ENCODE measurements at regions of chr10 and their contacts with region 1.

Region 1: DNA sequence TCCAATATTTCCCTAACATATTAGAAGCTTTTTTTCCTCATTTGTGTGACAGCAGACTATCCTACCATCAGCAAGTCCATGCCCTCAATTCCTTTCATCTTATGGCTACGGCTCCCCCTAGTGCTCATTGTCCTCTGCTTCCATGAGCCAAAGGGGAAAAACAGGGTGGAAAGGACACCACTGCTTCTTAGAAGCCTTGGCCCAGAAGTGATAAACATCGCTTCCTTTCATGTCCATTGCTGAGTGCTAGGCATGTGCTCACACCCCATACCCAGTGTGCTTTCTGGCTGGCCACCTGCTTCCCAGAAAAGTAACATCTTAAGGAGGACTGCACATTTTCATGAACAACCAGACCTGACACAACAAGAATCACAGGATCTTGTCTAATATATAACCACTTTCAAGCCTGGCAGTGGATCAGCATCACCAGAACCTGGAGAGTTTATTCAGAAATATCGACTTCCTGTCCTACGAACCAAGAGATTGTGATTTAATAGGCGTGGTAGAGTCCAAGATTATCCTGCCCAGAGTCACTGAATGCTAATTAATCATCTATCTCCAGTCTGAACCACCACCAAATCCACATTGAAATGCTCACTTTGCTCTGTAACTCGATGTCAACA is 650.5 kb upstream of the SORCS1 start:
- DNase-seq: peak; percentile 83
- H3K4me3 Mint-ChIP-seq: no peak overlapping the region
- H3K27ac Mint-ChIP-seq: no peak overlapping the region
- H3K4me1 Mint-ChIP-seq: peaks cover 6% of the 10 kb centered on the region
- H3K27me3 Mint-ChIP-seq: no peaks in the 10 kb centered on the region
- CTCF ChIP-seq: peak; percentile 68

Region 2: GRCh38 chr10:106705681-106706100 is 1109.3 kb before region 1 on chr10:
- CTCF ChIA-PET with region 1: interaction called, 35 read pairs
- POLR2A ChIA-PET with region 1: no interaction called
- intact Hi-C with region 1: loop called (anchors 5 kb)
- DNase-seq: peak; percentile 75
- H3K4me3 Mint-ChIP-seq: no peak overlapping the region
- H3K27ac Mint-ChIP-seq: peak overlapping the region; percentile 52
- H3K4me1 Mint-ChIP-seq: peaks cover 6% of the 10 kb centered on the region
- H3K27me3 Mint-ChIP-seq: no peaks in the 10 kb centered on the region
- CTCF ChIP-seq: peak; percentile 79

Region 3: DNA sequence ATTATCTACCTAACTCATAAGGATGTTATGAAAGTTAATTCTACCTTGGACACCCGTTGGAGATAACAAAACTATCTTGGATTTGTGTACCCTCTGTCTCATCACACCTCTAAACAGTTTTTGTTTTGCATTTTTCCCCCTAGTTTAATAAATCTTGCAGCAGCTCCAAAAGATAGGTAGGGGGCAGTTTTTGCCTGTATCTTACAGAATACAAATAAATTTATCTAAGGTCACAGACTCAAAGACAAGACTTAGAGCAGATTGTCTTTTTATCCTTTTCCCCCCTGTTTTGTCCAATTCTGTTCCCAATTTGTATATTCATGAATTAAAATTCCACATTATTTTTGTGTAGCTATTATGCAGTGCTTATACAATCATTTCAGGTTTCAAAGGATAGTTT is 645.5 kb before region 1 on chr10:
- CTCF ChIA-PET with region 1: interaction called, 3 read pairs
- POLR2A ChIA-PET with region 1: no interaction called
- intact Hi-C with region 1: loop called (anchors 2 kb)
- DNase-seq: no peak
- H3K4me3 Mint-ChIP-seq: no peak overlapping the region
- H3K27ac Mint-ChIP-seq: no peak overlapping the region
- H3K4me1 Mint-ChIP-seq: no peaks in the 10 kb centered on the region
- H3K27me3 Mint-ChIP-seq: no peaks in the 10 kb centered on the region
- CTCF ChIP-seq: peak; percentile 14

Region 4: GRCh38 chr10:107546287-107546686 is 268.7 kb before region 1 on chr10:
- CTCF ChIA-PET with region 1: no interaction called
- POLR2A ChIA-PET with region 1: no interaction called
- intact Hi-C with region 1: loop called (anchors 1 kb)
- DNase-seq: peak; percentile 89
- H3K4me3 Mint-ChIP-seq: peak overlapping the region; percentile 58
- H3K27ac Mint-ChIP-seq: peak overlapping the region; percentile 84
- H3K4me1 Mint-ChIP-seq: peaks cover 18% of the 10 kb centered on the region
- H3K27me3 Mint-ChIP-seq: no peaks in the 10 kb centered on the region
- CTCF ChIP-seq: no peak

Region 5: DNA sequence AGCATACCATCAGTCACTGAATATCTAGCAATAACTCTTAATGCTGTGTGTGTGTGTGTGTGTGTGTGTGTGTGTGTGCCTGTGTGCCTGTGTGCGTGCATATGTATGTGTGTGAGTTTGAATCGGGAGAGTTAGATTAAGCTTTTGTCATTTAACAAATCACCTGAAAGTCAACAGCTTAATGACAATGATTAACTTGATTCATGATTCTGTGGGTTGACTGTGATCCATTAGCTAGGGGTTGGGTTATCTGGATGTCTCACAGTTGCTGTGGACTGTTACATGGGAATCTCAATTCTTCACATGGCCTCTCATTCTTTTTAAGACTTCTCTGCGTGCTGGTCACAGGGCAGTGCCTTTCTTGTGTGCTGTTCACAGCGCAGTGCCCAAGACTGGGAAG is 11.4 kb before region 1 on chr10:
- CTCF ChIA-PET with region 1: interaction called, 10 read pairs
- POLR2A ChIA-PET with region 1: no interaction called
- intact Hi-C with region 1: no loop called
- DNase-seq: no peak
- H3K4me3 Mint-ChIP-seq: no peak overlapping the region
- H3K27ac Mint-ChIP-seq: no peak overlapping the region
- H3K4me1 Mint-ChIP-seq: no peaks in the 10 kb centered on the region
- H3K27me3 Mint-ChIP-seq: no peaks in the 10 kb centered on the region
- CTCF ChIP-seq: no peak

Region 6: DNA sequence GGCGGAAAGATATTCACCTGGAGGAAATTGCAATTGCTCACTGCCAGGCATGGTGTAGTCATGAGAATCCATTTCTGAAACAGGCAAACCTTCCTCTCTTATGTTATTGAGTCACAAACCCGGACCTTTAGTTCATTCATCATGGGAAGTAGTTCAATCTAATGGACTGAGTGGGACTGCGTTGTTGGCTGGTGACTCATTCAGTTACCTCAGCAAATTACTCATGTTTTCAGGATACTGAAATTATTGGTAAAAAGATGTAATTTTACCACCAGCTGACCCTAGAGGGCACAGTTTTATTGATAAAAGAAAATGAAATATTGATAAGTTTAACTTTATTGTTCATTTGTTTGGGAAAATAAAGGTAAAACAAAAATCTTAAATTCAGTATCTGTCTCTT is 543.9 kb after region 1 on chr10:
- CTCF ChIA-PET with region 1: no interaction called
- POLR2A ChIA-PET with region 1: no interaction called
- intact Hi-C with region 1: no loop called
- DNase-seq: peak; percentile 88
- H3K4me3 Mint-ChIP-seq: no peak overlapping the region
- H3K27ac Mint-ChIP-seq: peak overlapping the region; percentile 2
- H3K4me1 Mint-ChIP-seq: peaks cover 6% of the 10 kb centered on the region
- H3K27me3 Mint-ChIP-seq: no peaks in the 10 kb centered on the region
- CTCF ChIP-seq: peak; percentile 31